ENCODE measurements at regions of chr5 and their contacts with region 1.

Region 1: GRCh38 chr5:159814810-159815585 is 101.3 kb upstream of the ADRA1B start:
- DNase-seq: no peak
- H3K4me3 Mint-ChIP-seq: no peak overlapping the region
- H3K27ac Mint-ChIP-seq: no peak overlapping the region
- H3K4me1 Mint-ChIP-seq: peaks cover 8% of the 10 kb centered on the region
- H3K27me3 Mint-ChIP-seq: peaks cover 4% of the 10 kb centered on the region

Region 2: GRCh38 chr5:159402311-159402710 is 412.7 kb before region 1 on chr5:
- CTCF ChIA-PET with region 1: no interaction called
- POLR2A ChIA-PET with region 1: no interaction called
- intact Hi-C with region 1: no loop called
- DNase-seq: no peak
- H3K4me3 Mint-ChIP-seq: no peak overlapping the region
- H3K27ac Mint-ChIP-seq: no peak overlapping the region
- H3K4me1 Mint-ChIP-seq: no peaks in the 10 kb centered on the region
- H3K27me3 Mint-ChIP-seq: peaks cover 18% of the 10 kb centered on the region

Region 3: DNA sequence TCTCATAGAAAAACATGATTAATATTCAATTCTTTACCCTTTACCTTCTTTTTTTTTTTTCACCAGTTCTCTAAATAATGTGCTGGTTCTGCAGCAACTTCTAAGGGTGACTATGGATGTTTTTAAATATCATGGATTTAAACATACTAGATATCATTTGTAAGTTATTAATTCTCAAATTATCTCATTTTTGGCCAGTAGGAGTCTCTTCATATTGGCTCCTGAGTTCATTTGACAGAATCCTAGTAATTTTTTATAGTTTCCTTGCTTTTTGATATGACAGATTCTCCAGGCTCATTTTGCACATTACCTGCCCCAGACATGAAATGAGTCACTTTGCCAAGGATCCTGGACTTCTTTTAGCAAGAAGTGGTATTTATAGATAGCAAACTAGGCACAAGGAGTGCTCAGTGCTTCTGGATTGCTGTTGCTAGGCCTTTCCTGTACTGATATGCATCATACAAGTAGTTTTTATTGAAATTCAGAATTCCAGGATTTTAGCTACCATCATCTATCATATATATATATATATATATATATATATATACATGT is 283.4 kb before region 1 on chr5:
- CTCF ChIA-PET with region 1: no interaction called
- POLR2A ChIA-PET with region 1: no interaction called
- intact Hi-C with region 1: no loop called
- DNase-seq: no peak
- H3K4me3 Mint-ChIP-seq: no peak overlapping the region
- H3K27ac Mint-ChIP-seq: no peak overlapping the region
- H3K4me1 Mint-ChIP-seq: no peaks in the 10 kb centered on the region
- H3K27me3 Mint-ChIP-seq: no peaks in the 10 kb centered on the region

Region 4: GRCh38 chr5:159851053-159851452 is 36.1 kb after region 1 on chr5:
- CTCF ChIA-PET with region 1: no interaction called
- POLR2A ChIA-PET with region 1: no interaction called
- intact Hi-C with region 1: loop called (anchors 1 kb)
- DNase-seq: no peak
- H3K4me3 Mint-ChIP-seq: no peak overlapping the region
- H3K27ac Mint-ChIP-seq: no peak overlapping the region
- H3K4me1 Mint-ChIP-seq: no peaks in the 10 kb centered on the region
- H3K27me3 Mint-ChIP-seq: peaks cover 17% of the 10 kb centered on the region

Measured in activated CD4-positive, alpha-beta memory T cell treated with anti-CD3 and anti-CD28 coated beads for 36 hours (primary cell).